ENCODE measurements at regions of chr2 and their contacts with region 1.

Region 1: DNA sequence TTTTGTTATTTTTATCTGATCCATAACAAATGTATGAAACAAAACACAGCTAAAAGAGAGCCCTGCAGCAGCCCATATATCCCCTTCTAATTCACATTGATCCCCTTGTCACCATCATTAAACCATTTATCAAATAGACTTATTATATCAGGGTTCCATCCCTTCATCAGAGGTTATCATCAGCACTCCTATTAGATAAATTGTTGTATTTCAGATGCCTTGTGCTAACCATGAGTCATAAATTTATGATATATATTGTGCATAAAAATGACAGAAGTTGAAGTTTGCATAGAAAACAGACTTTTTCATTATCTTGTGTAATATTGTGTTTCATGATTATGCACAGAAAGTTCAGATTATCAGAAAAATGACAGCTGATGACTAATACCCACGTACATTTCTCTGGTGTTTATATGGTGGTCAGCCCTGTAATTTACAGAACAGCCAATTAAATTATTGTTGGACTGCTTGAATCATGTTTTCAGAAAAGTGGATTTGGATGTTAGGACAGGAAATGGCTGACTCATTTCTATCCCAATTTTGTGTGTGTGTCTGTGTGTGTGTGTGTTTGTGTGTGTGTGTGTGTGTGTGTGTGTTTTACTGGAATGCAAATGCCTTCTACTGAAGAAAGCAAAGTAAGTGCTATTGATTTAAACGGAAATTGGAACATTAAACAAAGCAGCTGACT is 80.9 kb downstream of the PPP1R1C start:
- DNase-seq: no peak
- ATAC-seq: peak in 1 of 2 donors; percentile 65

Region 2: DNA sequence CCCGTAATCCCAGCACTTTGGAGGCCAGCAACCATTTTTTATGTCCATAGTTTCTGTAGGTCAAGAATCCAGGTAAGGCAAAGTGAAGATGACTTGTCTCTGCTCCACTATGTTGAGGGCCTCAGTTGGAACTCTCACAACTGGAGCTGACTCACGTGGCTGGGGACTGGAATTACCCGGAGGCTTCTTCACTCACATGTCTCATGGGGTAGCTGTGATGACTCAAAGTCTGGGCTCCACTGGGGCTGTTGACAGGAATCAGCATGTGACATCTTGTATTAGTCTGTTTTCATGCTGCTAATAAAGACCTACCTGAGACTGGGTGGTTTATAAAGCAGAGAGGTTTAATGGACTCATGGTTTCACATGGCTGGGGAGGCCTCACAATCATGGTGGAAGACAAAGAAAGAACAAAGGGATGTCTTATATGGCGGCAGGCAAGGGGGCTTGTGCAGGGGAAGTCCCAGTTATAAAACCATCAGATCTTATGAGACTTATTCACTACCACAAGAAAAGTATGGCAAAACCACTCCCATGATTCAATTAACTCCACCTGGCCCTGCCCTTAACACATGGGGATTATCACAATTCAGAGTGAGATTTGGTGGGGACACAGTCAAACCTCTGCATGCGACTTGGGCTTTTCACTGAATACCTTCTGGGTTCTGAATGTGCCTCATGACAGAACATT is 88.7 kb before region 1 on chr2:
- intact Hi-C with region 1: loop called in 1 of 2 experiments (anchors 10 kb)
- DNase-seq: no peak
- ATAC-seq: peak in 1 of 2 donors; percentile 30

Region 3: GRCh38 chr2:182165202-182165601 is 98.7 kb after region 1 on chr2:
- intact Hi-C with region 1: no loop called
- DNase-seq: no peak
- ATAC-seq: no peak

Measured in left cardiac atrium (tissue), 4 donors.